Tibial artery (tissue), 4 donors: ENCODE measurements at regions of chr9 and their contacts with region 1.

Region 1: GRCh38 chr9:112705768-112706427 is 12.0 kb downstream of the INIP start:
- DNase-seq: no peak
- H3K4me3 ChIP-seq: no peak overlapping the region
- H3K27ac ChIP-seq: no peak overlapping the region
- H3K4me1 ChIP-seq: no peaks in the 10 kb centered on the region
- H3K27me3 ChIP-seq: no peaks in the 10 kb centered on the region
- CTCF ChIP-seq: peak; percentile 19 to 31

Region 2: DNA sequence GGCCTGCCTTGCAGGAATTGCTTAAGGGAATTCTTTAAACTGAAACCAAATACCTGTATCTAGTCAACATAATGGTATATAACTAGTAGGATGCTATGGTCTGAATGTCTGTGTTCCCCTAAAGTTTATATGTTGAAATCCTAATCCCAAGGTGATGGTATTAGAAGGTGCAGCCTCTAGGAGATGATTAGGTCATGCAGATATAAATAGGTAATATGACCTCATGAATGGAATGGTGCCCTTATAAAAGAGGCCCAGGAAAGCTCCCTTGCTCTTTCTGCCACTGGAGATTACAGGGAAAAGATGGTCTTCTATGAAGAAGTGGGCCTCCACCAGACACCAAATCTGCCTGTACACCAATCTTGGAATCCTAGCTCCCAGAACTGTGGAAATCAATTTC is 226.7 kb before region 1 on chr9:
- intact Hi-C with region 1: loop called (anchors 10 kb)
- DNase-seq: no peak
- H3K4me3 ChIP-seq: no peak overlapping the region
- H3K27ac ChIP-seq: no peak overlapping the region
- H3K4me1 ChIP-seq: no peaks in the 10 kb centered on the region
- H3K27me3 ChIP-seq: no peaks in the 10 kb centered on the region
- CTCF ChIP-seq: no peak

Region 3: GRCh38 chr9:112647596-112647995 is 58.3 kb before region 1 on chr9:
- intact Hi-C with region 1: no loop called
- DNase-seq: no peak
- H3K4me3 ChIP-seq: no peak overlapping the region
- H3K27ac ChIP-seq: no peak overlapping the region
- H3K4me1 ChIP-seq: no peaks in the 10 kb centered on the region
- H3K27me3 ChIP-seq: no peaks in the 10 kb centered on the region
- CTCF ChIP-seq: no peak

Region 4: GRCh38 chr9:112665347-112665746 is 40.6 kb before region 1 on chr9:
- intact Hi-C with region 1: no loop called
- DNase-seq: no peak
- H3K4me3 ChIP-seq: no peak overlapping the region
- H3K27ac ChIP-seq: no peak overlapping the region
- H3K4me1 ChIP-seq: no peaks in the 10 kb centered on the region
- H3K27me3 ChIP-seq: no peaks in the 10 kb centered on the region
- CTCF ChIP-seq: peak in 1 of 2 experiments; percentile 15

Region 5: DNA sequence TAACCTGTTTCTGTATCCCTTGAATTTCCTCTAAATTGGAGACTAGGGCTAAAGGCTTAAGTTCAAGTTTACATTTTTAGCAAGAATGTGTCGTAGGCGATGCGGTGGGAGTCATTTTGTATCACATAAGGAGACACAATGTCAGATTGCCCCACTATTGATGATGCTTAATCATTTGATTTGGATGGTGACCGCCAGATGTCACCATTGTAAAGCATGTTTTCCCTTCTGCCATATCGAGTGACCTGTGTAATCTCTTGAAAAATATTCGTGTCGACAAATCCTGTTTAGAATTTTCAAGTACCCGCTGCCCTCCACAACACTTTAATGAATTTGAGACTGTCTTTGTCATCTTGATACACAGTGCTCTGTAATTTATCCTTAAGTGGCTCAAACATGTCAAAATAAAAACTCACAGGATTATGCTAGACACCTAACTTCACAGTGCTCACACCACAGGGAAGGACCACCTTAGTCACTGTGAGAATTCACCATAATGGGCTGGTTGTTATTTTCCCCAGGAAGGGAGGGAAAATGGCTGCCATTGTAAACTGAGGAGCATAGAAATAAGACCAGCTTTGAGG is 219.3 kb after region 1 on chr9:
- intact Hi-C with region 1: no loop called
- DNase-seq: no peak
- H3K4me3 ChIP-seq: no peak overlapping the region
- H3K27ac ChIP-seq: no peak overlapping the region
- H3K4me1 ChIP-seq: no peaks in the 10 kb centered on the region
- H3K27me3 ChIP-seq: peaks cover 0 to 7% of the 10 kb centered on the region in 2 donors
- CTCF ChIP-seq: peak; percentile 39 to 58